Activated T-helper 2 cell treated with anti-CD3 and anti-CD28 coated beads, Interferon-gamma antibody, Interleukin-2, Interleukin-4, amounts not matched to agents 10 μg/mL and 5 μg/mL and 100 μg/mL, durations not matched to agents 14 hours and 24 hours and 36 hours (primary cell): ENCODE measurements at regions of chrX and their contacts with region 1.

Region 1: GRCh38 chrX:97399400-97399799 is 515.7 kb downstream of the RPA4 start:
- DNase-seq: no peak
- H3K4me3 Mint-ChIP-seq: peak overlapping the region; percentile 10
- H3K27ac Mint-ChIP-seq: peak overlapping the region; percentile 83
- H3K4me1 Mint-ChIP-seq: peaks cover 59% of the 10 kb centered on the region
- H3K27me3 Mint-ChIP-seq: no peaks in the 10 kb centered on the region

Region 2: GRCh38 chrX:96684339-96685209 is 714.8 kb before region 1 on chrX and contains the start of gene DIAPH2:
- intact Hi-C with region 1: loop called (anchors 1 kb)
- DNase-seq: peak; percentile 75
- H3K4me3 Mint-ChIP-seq: peak within 1 kb of the TSS; percentile 95
- H3K27ac Mint-ChIP-seq: peak within 1 kb of the TSS; percentile 97
- H3K4me1 Mint-ChIP-seq: peaks cover 19% of the 10 kb centered on the region
- H3K27me3 Mint-ChIP-seq: no peaks in the 10 kb centered on the region
- total RNA-seq, gene DIAPH2: 14.7 and 14.9 TPM in 2 replicates

Region 3: DNA sequence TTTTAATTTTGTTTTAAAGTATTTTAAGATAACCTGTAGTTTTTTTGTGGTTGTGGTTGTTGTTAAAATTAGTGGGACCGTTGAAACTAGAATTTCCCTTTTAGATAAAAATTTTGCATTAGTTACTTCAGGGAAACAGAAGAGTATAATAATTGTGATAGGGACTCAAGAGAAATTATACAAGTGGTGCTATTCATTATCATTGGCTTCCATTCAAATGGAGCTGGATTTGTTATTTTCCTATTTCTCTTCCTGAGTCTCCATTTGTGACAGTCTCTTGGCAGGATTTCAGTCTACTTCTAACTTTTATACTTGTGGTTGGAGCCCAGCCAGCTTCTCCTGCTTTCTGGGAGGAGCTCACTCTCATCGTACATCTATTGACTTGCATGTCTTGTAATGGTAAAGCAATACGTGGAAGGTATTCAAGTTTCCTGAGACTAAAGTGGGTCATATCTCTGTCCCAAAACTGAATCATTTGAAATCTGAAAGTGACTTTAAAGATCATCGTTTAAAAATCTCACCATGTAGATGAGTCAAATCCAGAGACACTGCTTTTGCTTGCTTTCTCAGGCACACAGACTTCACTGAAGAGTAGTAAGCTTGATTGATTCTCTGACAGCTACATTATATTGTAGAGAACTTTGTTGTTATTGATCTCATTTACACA is 359.9 kb before region 1 on chrX:
- intact Hi-C with region 1: loop called (anchors 2 kb)
- DNase-seq: no peak
- H3K4me3 Mint-ChIP-seq: no peak overlapping the region
- H3K27ac Mint-ChIP-seq: peak overlapping the region; percentile 50
- H3K4me1 Mint-ChIP-seq: peaks cover 16% of the 10 kb centered on the region
- H3K27me3 Mint-ChIP-seq: no peaks in the 10 kb centered on the region

Region 4: GRCh38 chrX:97330151-97330550 is 69.2 kb before region 1 on chrX:
- intact Hi-C with region 1: loop called (anchors 10 kb)
- DNase-seq: no peak
- H3K4me3 Mint-ChIP-seq: no peak overlapping the region
- H3K27ac Mint-ChIP-seq: no peak overlapping the region
- H3K4me1 Mint-ChIP-seq: peaks cover 7% of the 10 kb centered on the region
- H3K27me3 Mint-ChIP-seq: no peaks in the 10 kb centered on the region

Region 5: DNA sequence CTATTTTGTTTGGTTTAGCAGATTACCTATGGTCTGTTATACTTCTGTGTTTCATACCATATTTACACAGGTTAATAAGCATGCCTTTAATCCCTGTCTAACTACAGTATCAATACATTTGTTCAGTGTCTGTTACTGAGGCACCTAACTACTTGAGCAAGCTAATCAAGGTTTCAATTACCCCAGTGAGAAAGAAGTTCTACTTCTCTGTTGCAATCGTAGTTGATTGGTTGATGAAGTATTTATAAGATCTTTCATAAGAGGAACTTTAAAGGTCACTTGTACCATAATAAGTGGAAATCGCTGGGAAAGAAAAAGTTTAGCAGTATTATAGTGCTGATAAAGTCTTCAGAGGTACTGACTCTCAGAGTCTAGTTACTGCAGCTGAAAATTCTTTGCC is 25.1 kb before region 1 on chrX:
- intact Hi-C with region 1: no loop called
- DNase-seq: no peak
- H3K4me3 Mint-ChIP-seq: no peak overlapping the region
- H3K27ac Mint-ChIP-seq: no peak overlapping the region
- H3K4me1 Mint-ChIP-seq: no peaks in the 10 kb centered on the region
- H3K27me3 Mint-ChIP-seq: no peaks in the 10 kb centered on the region

Region 6: GRCh38 chrX:97563531-97564133 is 164.2 kb after region 1 on chrX:
- intact Hi-C with region 1: loop called (anchors 10 kb)
- DNase-seq: peak; percentile 27
- H3K4me3 Mint-ChIP-seq: peak overlapping the region; percentile 69
- H3K27ac Mint-ChIP-seq: peak overlapping the region; percentile 68
- H3K4me1 Mint-ChIP-seq: peaks cover 11% of the 10 kb centered on the region
- H3K27me3 Mint-ChIP-seq: no peaks in the 10 kb centered on the region